Cardiac septum (tissue), 1 donor: ENCODE measurements at regions of chr5 and their contacts with region 1.

Region 1: DNA sequence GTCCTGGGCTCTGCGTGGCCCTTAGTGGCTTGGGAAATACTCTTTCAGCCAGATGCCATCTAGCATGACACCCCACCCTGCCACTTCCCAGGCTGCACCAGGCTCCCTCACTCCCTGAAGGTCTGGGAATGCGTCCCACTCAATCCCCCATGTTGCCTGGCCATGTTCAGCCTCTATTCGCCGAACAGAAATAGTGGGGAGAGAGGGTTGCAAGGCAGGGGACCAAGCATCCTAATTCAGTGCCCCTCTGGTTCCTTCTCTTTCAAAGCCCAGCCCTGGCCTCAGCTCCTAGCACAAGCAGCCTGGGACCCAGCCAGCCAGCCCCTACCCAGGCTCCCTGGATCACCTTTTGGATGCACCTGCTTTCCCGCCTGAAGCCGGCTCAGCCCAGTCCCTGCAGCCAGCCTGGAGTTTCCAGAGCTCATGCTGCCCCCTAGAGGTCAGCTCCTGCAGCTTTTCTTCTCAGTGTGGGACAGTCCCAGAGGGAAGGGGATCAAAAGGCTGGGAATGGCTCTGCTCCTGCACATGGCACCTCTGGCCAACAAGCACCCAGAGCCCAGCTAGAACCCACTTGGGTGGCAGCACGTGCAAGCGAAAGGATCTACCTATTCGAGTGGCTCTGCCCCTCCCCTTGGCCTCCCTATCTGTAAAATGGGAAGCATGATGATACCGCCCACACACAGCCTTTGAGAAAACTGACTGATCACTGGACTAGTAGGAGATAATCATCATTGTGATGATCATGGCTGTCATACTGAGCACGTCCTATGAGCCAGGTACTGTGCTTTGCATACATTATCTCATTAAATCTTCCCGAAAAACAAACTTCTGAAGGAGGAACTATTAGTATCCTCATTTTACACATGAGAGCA is 48.7 kb upstream of the C5orf58 start:
- DNase-seq: peak; percentile 86

Region 2: DNA sequence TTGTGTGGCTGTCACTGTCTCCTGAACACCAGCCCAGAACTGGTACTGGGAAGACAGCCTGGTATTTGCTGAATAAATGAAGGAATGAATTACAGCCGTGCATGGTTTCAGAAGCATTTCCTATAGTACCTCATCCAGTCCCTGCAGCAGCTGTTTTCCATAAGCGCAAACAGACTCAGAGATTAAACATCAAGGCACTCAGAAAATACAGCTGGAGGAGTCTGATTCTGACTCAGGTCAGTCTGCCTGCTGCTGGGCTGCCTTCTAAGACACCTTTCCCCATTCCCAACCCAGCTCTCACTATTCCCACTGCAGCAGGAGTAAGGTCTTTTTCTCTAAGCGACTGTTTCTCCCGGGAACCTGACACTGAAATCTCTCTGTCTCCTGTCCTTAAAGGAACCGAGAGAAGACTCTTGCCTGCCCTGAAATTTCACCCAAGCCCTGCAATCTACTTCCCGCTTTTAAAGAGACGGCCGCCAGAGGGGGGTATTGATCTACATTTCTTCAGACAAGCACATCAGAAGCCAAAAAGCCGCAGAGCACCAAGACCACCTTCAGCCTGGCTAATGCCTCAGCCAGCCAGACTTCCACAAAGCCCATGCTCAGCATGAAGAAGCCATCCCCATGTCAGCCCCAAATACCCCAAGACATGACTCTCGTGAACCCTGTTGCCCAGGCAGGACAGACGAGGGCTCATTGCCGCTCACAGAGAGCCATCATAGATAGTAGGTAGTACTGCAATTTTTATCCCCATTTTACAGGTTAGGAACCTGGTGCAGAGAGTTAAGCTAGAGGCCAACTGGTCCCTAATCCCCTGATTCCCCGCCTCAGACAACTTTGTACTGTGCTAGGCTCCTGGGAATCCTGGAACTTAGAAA is 83.7 kb before region 1 on chr5:
- intact Hi-C with region 1: loop called (anchors 1 kb)
- DNase-seq: peak; percentile 80